PC-9 (cell line): ENCODE measurements at regions of chr11 and their contacts with region 1.

Region 1: DNA sequence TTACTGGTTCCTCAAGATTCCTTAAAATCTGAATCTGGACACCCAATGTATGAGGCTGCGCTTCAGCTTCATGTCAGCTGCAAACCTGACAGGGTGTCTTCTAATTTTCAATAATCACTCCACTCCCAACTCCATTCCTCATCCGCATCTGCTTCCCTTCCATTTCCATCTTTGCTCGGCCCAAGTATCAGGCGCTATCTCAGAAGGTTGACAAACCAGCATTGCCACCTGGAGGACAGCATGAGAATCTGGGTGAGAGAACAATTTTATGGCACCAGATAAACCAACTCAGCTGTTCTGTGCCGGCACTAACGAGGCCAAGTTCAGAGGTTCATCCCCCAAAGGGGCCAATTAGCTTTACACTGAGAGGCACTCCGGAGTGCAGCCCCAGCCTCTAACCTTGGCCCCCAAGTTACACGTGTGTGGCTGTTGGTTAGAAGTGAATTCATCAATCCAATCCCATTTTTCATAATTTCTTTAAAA is 79.1 kb upstream of the LMO2 start:
- DNase-seq: peak in 1 of 2 experiments; percentile 34
- H3K4me3 ChIP-seq: no peak overlapping the region
- H3K27ac ChIP-seq: no peak overlapping the region
- H3K4me1 ChIP-seq: peaks cover 1% of the 10 kb centered on the region
- H3K27me3 ChIP-seq: no peaks in the 10 kb centered on the region
- CTCF ChIP-seq: peak; percentile 76

Region 2: GRCh38 chr11:33808228-33808828 is 162.7 kb before region 1 on chr11:
- CTCF ChIA-PET with region 1: no interaction called
- POLR2A ChIA-PET with region 1: no interaction called
- intact Hi-C with region 1: loop called (anchors 1 kb)
- DNase-seq: peak; percentile 65 to 84
- H3K4me3 ChIP-seq: no peak overlapping the region
- H3K27ac ChIP-seq: no peak overlapping the region
- H3K4me1 ChIP-seq: no peaks in the 10 kb centered on the region
- H3K27me3 ChIP-seq: no peaks in the 10 kb centered on the region
- CTCF ChIP-seq: peak; percentile 98

Region 3: GRCh38 chr11:33835143-33835878 is 135.7 kb before region 1 on chr11:
- CTCF ChIA-PET with region 1: interaction called, 9 read pairs
- POLR2A ChIA-PET with region 1: no interaction called
- intact Hi-C with region 1: loop called (anchors 1 kb)
- DNase-seq: peak; percentile 18 to 69
- H3K4me3 ChIP-seq: no peak overlapping the region
- H3K27ac ChIP-seq: no peak overlapping the region
- H3K4me1 ChIP-seq: peaks cover 32% of the 10 kb centered on the region
- H3K27me3 ChIP-seq: no peaks in the 10 kb centered on the region
- CTCF ChIP-seq: peak; percentile 79

Region 4: DNA sequence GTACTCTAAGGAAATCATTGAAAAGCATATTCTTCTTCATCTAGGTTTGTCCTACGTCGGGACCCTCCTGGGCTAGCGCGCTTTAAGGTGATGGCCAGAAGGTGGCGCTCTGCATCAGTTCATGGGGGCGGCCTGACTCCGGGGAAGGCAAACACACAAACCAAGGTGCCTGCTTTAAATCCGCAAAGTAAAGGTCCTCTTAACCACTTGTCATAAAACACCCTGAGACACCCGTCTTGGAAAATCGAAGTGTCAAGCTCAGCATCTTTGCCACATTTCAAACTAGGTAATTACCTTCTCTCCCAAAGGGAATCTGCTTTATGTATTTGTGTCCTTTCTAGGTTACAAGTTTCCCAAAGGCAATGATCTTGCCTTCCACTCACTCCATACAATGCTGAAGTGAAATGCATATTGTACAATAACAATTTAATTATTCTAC is 113.1 kb before region 1 on chr11:
- CTCF ChIA-PET with region 1: no interaction called
- POLR2A ChIA-PET with region 1: no interaction called
- intact Hi-C with region 1: loop called (anchors 1 kb)
- DNase-seq: peak; percentile 46 to 72
- H3K4me3 ChIP-seq: no peak overlapping the region
- H3K27ac ChIP-seq: no peak overlapping the region
- H3K4me1 ChIP-seq: no peaks in the 10 kb centered on the region
- H3K27me3 ChIP-seq: peaks cover 39% of the 10 kb centered on the region; the same call in 1 of the 2 replicates
- CTCF ChIP-seq: peak; percentile 98

Region 5: DNA sequence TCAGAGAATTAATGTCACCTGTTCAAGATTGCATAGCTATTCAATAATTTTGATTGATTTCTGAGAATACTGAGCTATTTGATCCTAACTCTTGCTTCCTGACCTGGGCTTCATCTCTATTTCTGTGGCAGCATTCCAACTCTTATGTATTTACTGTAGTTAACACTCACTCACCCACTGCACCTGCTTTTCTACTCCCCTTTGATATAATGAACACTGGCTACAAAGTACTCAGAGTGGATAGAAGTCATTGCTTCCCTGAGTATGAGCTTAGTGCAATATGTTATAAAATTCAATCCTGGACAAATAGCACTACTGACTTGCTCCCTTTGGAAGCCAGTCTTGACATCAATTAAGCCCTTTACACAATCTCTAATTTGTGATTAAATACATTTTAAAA is 828.0 kb after region 1 on chr11:
- CTCF ChIA-PET with region 1: no interaction called
- POLR2A ChIA-PET with region 1: no interaction called
- intact Hi-C with region 1: no loop called
- DNase-seq: no peak
- H3K4me3 ChIP-seq: no peak overlapping the region
- H3K27ac ChIP-seq: no peak overlapping the region
- H3K4me1 ChIP-seq: no peaks in the 10 kb centered on the region
- H3K27me3 ChIP-seq: no peaks in the 10 kb centered on the region
- CTCF ChIP-seq: no peak